Endothelial cell of umbilical vein (primary cell): ENCODE measurements at regions of chr3 and their contacts with region 1.

Region 1: GRCh38 chr3:49093853-49094767 is at the start of gene QRICH1:
- DNase-seq: peak; percentile 99
- H3K4me3 ChIP-seq: peak within 1 kb of the TSS; percentile 79 to 100 (median 80)
- H3K27ac ChIP-seq: peak within 1 kb of the TSS; percentile 93
- H3K4me1 ChIP-seq: peaks cover 13% of the 10 kb centered on the region
- H3K27me3 ChIP-seq: no peaks in the 10 kb centered on the region
- CTCF ChIP-seq: peak; percentile 64 to 82
- POLR2A ChIP-seq: peak; percentile 13
- total RNA-seq, gene QRICH1: 106 and 116 TPM in 2 replicates

Region 2: DNA sequence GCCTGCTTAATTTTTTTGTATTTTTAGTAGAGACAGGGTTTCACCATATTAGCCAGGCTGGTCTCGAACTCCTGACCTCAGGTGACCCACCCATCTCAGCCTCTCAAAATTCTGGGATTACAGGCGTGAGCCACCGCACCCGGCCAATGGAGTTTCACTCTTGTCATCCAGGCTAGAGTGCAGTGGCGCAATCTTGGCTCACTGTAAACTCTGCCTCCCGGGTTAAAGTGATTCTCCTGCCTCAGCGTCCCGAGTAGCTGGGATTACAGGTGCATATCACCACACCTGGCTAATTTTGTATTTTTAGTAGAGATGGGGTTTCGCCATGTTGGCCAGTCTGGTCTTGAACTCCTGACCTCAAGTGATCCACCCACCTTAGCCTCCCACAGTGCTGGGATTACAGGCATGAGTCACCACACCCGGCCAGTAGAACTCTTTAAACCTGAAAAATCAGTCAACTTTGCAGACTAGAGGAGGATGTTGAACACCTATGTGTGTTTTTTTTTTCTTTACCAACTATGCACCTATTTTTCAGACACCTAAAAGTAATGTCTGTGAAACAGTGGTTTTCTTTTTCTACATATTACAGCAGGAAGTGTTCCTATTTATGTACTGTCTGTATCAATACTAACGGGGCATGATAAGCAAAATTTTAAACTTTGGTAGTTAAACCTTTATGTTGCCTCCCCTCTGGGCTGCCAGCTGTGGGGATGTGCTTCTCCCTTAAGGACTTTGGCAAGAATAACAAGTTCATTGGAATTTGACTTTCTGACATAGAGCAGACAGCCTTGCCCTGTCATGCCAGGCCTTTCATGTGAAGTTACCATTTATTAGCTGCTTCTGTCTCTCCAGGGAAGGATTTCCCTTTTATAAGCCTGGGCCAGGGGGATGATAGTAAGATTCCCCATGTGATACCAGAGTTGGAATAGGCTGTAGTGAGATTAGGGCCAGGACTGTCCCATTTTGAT is 167.4 kb before region 1 on chr3:
- CTCF ChIA-PET with region 1: no interaction called
- POLR2A ChIA-PET with region 1: no interaction called
- dilution Hi-C with region 1: no loop called
- intact Hi-C with region 1: no loop called
- DNase-seq: no peak
- H3K4me3 ChIP-seq: no peak overlapping the region
- H3K27ac ChIP-seq: peak overlapping the region; percentile 40
- H3K4me1 ChIP-seq: peaks cover 36% of the 10 kb centered on the region
- H3K27me3 ChIP-seq: no peaks in the 10 kb centered on the region
- CTCF ChIP-seq: no peak
- POLR2A ChIP-seq: no peak

Region 3: GRCh38 chr3:48989796-48990635 is 104.1 kb before region 1 on chr3 and contains the start of gene P4HTM:
- CTCF ChIA-PET with region 1: interaction called, 47 read pairs
- POLR2A ChIA-PET with region 1: no interaction called
- dilution Hi-C with region 1: no loop called
- intact Hi-C with region 1: loop called (anchors 1 kb)
- DNase-seq: peak; percentile 93
- H3K4me3 ChIP-seq: peak within 1 kb of the TSS; percentile 25 to 69 (median 57)
- H3K27ac ChIP-seq: peak within 1 kb of the TSS; percentile 97
- H3K4me1 ChIP-seq: peaks cover 21% of the 10 kb centered on the region
- H3K27me3 ChIP-seq: no peaks in the 10 kb centered on the region
- CTCF ChIP-seq: peak in 1 of 2 donors; percentile 48
- POLR2A ChIP-seq: peak; percentile 61
- total RNA-seq, gene P4HTM: 23.0 and 26.9 TPM in 2 replicates

Region 4: DNA sequence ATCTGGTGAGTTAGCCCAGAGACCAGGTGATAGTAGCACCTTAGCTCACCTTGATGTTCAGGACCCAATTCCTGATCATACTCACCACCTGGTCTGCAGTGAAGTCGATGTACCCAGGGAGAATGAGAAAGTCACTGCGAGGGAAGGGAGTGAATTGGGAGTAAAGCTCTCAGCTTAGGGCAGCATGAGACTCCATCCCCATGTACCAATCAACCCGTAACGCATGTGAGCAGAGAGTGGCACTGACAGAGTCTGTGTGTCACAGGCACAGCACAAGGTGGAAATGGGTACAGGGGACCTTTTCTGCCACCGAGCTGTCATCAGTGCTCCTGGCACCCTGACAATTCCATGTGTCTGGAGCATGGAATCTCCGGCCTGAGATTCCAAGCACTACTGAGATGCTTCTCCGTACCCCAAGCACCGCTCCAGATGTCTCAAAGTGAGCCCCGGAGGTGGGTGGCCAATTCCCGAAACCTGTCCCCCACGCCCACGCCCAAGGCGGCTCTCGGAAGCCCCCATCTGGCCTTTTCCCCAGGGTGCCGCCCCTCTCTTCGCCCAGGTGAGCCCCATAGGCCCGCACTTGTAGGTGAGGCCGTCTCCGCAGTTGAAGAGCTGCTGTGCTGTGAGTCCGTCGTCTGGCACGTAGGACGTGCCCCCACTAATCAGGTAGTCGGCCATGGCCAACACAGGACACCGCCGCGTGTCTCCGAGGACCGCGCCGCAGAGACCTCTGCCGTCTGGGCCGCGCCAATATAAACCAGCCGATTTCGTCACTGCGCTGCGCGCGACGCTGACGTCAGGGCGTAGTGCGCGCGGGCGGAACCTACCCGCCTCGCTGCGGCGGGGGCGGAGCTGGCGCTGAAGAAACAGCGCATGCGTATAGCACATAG is 65.2 kb before region 1 on chr3 and contains the start of gene IMPDH2:
- CTCF ChIA-PET with region 1: interaction called, 8 read pairs
- POLR2A ChIA-PET with region 1: interaction called, 17 read pairs
- dilution Hi-C with region 1: no loop called
- intact Hi-C with region 1: loop called (anchors 1 kb)
- DNase-seq: peak; percentile 97
- H3K4me3 ChIP-seq: peak within 1 kb of the TSS; percentile 7 to 66 (median 44)
- H3K27ac ChIP-seq: peak within 1 kb of the TSS; percentile 30
- H3K4me1 ChIP-seq: peaks cover 11% of the 10 kb centered on the region
- H3K27me3 ChIP-seq: no peaks in the 10 kb centered on the region
- CTCF ChIP-seq: peak in 1 of 2 donors; percentile 3
- POLR2A ChIP-seq: peak; percentile 99
- total RNA-seq, gene IMPDH2: 189 and 195 TPM in 2 replicates

Region 5: GRCh38 chr3:49120438-49121131 is 26.5 kb after region 1 on chr3 and contains the start of gene USP19:
- CTCF ChIA-PET with region 1: interaction called, 11 read pairs
- POLR2A ChIA-PET with region 1: interaction called, 7 read pairs
- dilution Hi-C with region 1: no loop called
- intact Hi-C with region 1: loop called (anchors 2 kb)
- DNase-seq: peak; percentile 94
- H3K4me3 ChIP-seq: peak within 1 kb of the TSS; percentile 44 to 71 (median 65)
- H3K27ac ChIP-seq: peak within 1 kb of the TSS; percentile 58
- H3K4me1 ChIP-seq: peaks cover 12% of the 10 kb centered on the region
- H3K27me3 ChIP-seq: no peaks in the 10 kb centered on the region
- CTCF ChIP-seq: no peak
- POLR2A ChIP-seq: peak; percentile 92
- total RNA-seq, gene USP19: 39.1 and 42.2 TPM in 2 replicates

Region 6: DNA sequence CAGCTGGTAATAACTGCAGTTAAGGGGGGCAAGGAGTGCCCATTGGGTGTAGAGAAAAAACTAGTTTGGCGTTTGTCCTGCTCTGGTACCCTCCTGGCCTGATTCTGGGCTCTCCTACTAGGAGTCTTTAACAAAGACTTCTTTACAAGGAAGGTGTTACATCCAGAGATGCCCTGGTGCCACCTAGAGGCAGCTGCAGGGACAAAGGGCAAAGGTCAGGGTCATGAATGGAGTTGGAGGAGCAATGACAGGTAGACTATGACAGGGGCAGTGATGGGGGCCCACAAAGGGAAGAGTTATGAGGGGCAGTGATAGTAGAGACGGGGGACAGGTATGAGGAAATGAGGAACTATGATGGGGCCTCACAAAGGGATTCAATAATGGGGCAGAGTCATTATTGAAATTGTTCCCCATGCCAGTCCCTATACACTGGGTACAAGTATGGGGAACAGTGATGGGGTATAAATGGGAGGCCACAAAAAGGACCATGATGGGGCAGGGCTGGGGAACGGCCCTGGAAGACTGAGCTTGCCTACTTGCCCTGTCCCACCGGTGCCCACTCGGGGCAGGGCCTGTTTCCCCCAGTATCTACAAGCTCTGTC is 64.1 kb after region 1 on chr3:
- CTCF ChIA-PET with region 1: no interaction called
- POLR2A ChIA-PET with region 1: no interaction called
- dilution Hi-C with region 1: no loop called
- intact Hi-C with region 1: no loop called
- DNase-seq: no peak
- H3K4me3 ChIP-seq: no peak overlapping the region
- H3K27ac ChIP-seq: no peak overlapping the region
- H3K4me1 ChIP-seq: no peaks in the 10 kb centered on the region
- H3K27me3 ChIP-seq: no peaks in the 10 kb centered on the region
- CTCF ChIP-seq: peak; percentile 12 to 19
- POLR2A ChIP-seq: no peak

Region 7: GRCh38 chr3:49171119-49171774 is 77.1 kb after region 1 on chr3 and contains the start of gene KLHDC8B:
- CTCF ChIA-PET with region 1: interaction called, 6 read pairs
- POLR2A ChIA-PET with region 1: interaction called, 3 read pairs
- dilution Hi-C with region 1: no loop called
- intact Hi-C with region 1: loop called (anchors 1 kb)
- DNase-seq: peak; percentile 95
- H3K4me3 ChIP-seq: peak within 1 kb of the TSS; percentile 44 to 94 (median 71)
- H3K27ac ChIP-seq: peak within 1 kb of the TSS; percentile 24
- H3K4me1 ChIP-seq: peaks cover 25% of the 10 kb centered on the region
- H3K27me3 ChIP-seq: no peaks in the 10 kb centered on the region
- CTCF ChIP-seq: peak; percentile 93 to 99
- POLR2A ChIP-seq: peak; percentile 69
- total RNA-seq, gene KLHDC8B: 22.9 and 36.0 TPM in 2 replicates

Region 8: GRCh38 chr3:49339945-49340800 is 246.1 kb after region 1 on chr3 and contains the start of gene USP4:
- CTCF ChIA-PET with region 1: interaction called, 3 read pairs
- POLR2A ChIA-PET with region 1: interaction called, 4 read pairs
- dilution Hi-C with region 1: no loop called
- intact Hi-C with region 1: loop called (anchors 5 kb)
- DNase-seq: peak; percentile 91
- H3K4me3 ChIP-seq: peak within 1 kb of the TSS; percentile 65 to 75 (median 75)
- H3K27ac ChIP-seq: peak within 1 kb of the TSS; percentile 80
- H3K4me1 ChIP-seq: peaks cover 28% of the 10 kb centered on the region
- H3K27me3 ChIP-seq: no peaks in the 10 kb centered on the region
- CTCF ChIP-seq: peak; percentile 45 to 52
- POLR2A ChIP-seq: peak; percentile 87
- total RNA-seq, gene USP4: 61.3 and 63.0 TPM in 2 replicates

Region 9: DNA sequence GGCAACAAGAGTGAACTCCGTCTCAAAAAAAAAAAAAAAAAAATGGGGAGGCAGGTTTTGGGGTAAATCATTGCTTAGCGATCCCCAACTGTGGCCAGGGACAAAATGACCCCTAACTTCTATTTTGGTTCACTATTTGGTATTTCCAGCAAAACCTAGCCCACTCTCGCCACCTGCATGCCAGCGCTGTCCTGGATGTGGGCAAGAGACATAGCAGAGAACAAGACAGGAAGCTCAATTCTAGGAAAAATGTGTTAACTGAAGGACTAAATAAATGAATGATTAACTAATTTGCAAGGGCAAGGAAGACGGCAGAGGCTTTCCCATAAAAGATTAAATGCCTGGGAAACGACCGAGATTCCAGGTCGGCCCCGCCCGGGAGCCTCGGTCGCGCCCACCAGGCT is 334.6 kb after region 1 on chr3:
- CTCF ChIA-PET with region 1: interaction called, 3 read pairs
- POLR2A ChIA-PET with region 1: no interaction called
- dilution Hi-C with region 1: no loop called
- intact Hi-C with region 1: loop called (anchors 5 kb)
- DNase-seq: no peak
- H3K4me3 ChIP-seq: peak overlapping the region in 2 of 3 experiments; percentile 75 to 92
- H3K27ac ChIP-seq: no peak overlapping the region
- H3K4me1 ChIP-seq: peaks cover 3% of the 10 kb centered on the region
- H3K27me3 ChIP-seq: no peaks in the 10 kb centered on the region
- CTCF ChIP-seq: no peak
- POLR2A ChIP-seq: no peak